Activated CD4-positive, alpha-beta T cell treated with anti-CD3 and anti-CD28 coated beads, Interleukin-2, amount 10 ng/mL, durations not matched to agents 24 days and 14 days (primary cell): ENCODE measurements at regions of chr20 and their contacts with region 1.

Region 1: DNA sequence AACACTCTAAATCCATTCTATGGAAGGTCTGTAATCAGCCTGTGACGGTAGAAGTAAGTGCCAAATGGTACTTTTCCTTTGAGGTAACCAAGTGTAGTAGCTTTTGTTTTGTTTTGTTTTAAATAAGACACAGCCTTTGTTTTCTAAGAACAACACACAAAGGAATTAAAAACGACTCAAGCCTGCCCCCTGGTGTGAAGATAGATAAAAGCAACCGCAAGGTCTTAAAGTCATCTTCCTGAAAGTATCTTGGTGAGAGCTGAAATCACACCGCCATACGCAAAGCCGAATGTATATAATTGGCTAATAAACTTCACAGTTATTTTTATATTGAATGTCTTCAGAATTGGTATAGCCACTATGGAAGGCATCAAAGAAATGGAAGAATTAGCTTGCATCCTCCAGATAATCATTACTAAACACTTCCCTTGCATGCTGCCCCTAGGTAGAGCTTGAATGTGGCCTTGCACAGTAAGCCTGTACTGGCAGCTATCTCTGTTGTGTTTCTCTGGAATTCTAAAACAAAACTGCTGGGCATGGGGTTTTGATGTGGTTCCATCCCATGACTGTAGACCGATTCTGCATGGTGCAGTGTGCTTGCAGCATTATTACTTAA is 95.6 kb downstream of the LAMP5 start:
- DNase-seq: peak; percentile 59
- H3K4me3 Mint-ChIP-seq: no peak overlapping the region
- H3K27ac Mint-ChIP-seq: no peak overlapping the region
- H3K4me1 Mint-ChIP-seq: no peaks in the 10 kb centered on the region
- H3K27me3 Mint-ChIP-seq: no peaks in the 10 kb centered on the region

Region 2: DNA sequence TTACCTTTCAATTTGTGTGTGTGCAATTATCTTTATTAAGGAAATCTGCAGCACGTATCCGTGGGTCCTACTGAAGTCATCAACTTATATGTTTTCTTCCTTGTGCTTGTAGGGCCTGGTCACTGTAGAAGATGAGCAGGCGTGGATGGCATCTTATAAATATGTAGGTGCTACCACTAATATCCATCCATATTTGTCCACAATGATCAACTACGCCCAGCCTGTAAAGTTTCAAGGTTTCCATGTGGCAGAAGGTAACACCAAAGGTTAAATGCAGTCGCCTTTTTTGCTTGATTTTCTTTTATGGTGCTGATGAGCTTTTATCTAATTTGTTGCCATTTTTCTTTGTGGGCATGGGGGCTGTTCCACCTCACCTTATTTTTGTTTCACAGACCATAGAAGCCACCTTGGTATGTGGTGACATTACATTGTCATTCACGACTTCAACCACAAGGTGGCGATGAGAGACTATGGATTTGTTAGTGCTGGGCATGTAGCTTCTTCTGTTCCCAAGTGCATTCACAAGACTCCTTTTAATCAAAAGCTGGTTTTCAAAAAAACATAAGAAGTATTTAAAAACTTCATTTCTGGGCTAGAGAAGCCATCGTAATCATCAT is 202.1 kb before region 1 on chr20:
- intact Hi-C with region 1: loop called (anchors 1 kb)
- DNase-seq: peak; percentile 85
- H3K4me3 Mint-ChIP-seq: no peak overlapping the region
- H3K27ac Mint-ChIP-seq: no peak overlapping the region
- H3K4me1 Mint-ChIP-seq: no peaks in the 10 kb centered on the region
- H3K27me3 Mint-ChIP-seq: no peaks in the 10 kb centered on the region